ENCODE measurements at regions of chr6 and their contacts with region 1.

Region 1: GRCh38 chr6:43361269-43361668 is 8.2 kb downstream of the ZNF318 start:
- DNase-seq: no peak
- H3K4me3 ChIP-seq: no peak overlapping the region
- CTCF ChIP-seq: no peak

Region 2: GRCh38 chr6:43242908-43243663 is 118.2 kb before region 1 on chr6 and contains the start of gene TTBK1:
- CTCF ChIA-PET with region 1: no interaction called
- POLR2A ChIA-PET with region 1: no interaction called
- DNase-seq: no peak
- H3K4me3 ChIP-seq: no peak within 1 kb of the TSS
- CTCF ChIP-seq: no peak

Region 3: GRCh38 chr6:43347021-43347420 is 14.2 kb before region 1 on chr6:
- CTCF ChIA-PET with region 1: interaction called, 10 read pairs
- POLR2A ChIA-PET with region 1: no interaction called
- DNase-seq: no peak
- H3K4me3 ChIP-seq: no peak overlapping the region
- CTCF ChIP-seq: no peak

Region 4: GRCh38 chr6:43427406-43428111 is 66.3 kb after region 1 on chr6 and contains the start of gene ABCC10:
- CTCF ChIA-PET with region 1: no interaction called
- POLR2A ChIA-PET with region 1: no interaction called
- DNase-seq: peak; percentile 69
- H3K4me3 ChIP-seq: peak within 1 kb of the TSS; percentile 96
- CTCF ChIP-seq: peak; percentile 12

Measured in AG04449 (cell line).